Panc1 (cell line): ENCODE measurements at regions of chr22 and their contacts with region 1.

Region 1: DNA sequence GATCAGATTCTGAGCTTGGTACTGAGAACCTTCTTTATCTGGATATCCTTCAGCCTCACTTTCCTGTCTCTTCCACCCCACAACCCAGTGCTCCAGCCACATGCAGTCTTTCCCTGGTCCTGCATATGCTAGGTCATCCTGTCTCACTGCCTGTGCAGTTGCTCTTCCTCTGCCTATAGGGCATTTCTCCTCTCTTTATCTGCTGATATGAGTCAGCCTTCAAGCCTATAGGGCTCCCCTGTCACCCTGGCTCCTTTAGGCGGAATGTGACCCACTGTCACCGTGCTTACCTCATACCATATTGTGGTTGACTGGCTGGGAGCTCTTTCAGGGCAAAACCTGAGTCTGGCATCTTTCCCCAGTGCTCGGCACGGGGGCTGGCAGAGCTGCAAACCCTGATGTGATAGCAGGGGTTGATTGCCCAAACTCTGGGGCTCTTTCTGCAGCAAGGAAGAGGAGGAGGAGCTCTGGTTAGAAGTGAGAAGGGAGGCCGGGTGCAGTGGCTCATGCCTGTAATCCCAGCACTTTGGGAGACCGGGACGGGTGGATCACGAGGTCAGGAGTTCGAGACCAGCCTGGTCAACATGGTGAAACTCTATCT is 26.3 kb downstream of the MEI1 start:
- DNase-seq: no peak
- ATAC-seq: peak; percentile 56; the same call in 1 of the 2 replicates
- H3K4me3 ChIP-seq: no peak overlapping the region
- H3K27ac ChIP-seq: no peak overlapping the region
- H3K4me1 ChIP-seq: no peaks in the 10 kb centered on the region
- H3K27me3 ChIP-seq: no peaks in the 10 kb centered on the region
- CTCF ChIP-seq: no peak

Region 2: GRCh38 chr22:41636467-41636866 is 89.1 kb before region 1 on chr22:
- CTCF ChIA-PET with region 1: no interaction called
- POLR2A ChIA-PET with region 1: no interaction called
- in situ Hi-C with region 1: no loop called
- intact Hi-C with region 1: no loop called
- DNase-seq: no peak
- ATAC-seq: no peak
- H3K4me3 ChIP-seq: no peak overlapping the region
- H3K27ac ChIP-seq: no peak overlapping the region
- H3K4me1 ChIP-seq: no peaks in the 10 kb centered on the region
- H3K27me3 ChIP-seq: no peaks in the 10 kb centered on the region
- CTCF ChIP-seq: no peak

Region 3: DNA sequence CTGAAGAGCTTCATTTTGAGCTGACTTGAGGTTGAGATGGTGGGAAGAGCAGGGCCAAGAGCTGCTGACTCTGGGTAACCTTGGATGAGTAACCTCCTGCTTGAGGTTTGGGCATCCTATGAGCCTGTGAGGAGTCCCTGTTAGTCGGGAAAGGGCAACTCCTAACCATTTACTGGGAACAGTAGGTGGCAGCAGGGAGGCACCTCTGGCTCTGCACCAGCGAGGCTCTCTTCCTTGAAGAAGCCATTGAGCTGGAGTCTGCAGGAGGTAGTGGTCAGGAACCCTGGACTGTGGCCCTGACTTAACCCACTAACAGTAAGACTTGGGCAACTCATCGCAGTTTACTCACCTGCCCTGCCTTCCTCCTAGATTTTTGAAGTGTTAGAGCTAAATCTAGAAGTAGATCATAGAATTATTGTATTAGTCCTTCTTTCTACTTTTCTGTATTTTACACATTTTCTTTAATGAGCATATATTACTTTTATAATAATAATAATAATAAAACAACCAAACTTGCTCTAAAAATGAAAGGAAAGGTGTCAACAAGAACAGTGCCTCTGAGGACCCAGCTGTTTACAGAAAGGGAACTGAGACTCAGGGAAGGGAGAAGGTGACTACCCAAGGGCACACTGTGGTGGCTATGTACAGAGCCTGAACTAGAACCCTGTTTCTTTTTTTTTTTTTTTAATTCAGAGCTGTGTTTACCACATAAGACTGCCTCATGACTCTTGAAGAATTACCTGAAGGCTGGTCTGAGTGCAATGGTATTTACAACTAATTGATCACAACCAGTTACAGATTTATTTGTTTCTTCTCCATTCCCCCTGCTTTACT is 21.2 kb after region 1 on chr22:
- CTCF ChIA-PET with region 1: interaction called, 5 read pairs
- POLR2A ChIA-PET with region 1: interaction called, 14 read pairs
- in situ Hi-C with region 1: no loop called
- intact Hi-C with region 1: no loop called
- DNase-seq: peak; percentile 66
- ATAC-seq: peak; percentile 100
- H3K4me3 ChIP-seq: no peak overlapping the region
- H3K27ac ChIP-seq: no peak overlapping the region
- H3K4me1 ChIP-seq: no peaks in the 10 kb centered on the region
- H3K27me3 ChIP-seq: no peaks in the 10 kb centered on the region
- CTCF ChIP-seq: peak; percentile 84

Region 4: DNA sequence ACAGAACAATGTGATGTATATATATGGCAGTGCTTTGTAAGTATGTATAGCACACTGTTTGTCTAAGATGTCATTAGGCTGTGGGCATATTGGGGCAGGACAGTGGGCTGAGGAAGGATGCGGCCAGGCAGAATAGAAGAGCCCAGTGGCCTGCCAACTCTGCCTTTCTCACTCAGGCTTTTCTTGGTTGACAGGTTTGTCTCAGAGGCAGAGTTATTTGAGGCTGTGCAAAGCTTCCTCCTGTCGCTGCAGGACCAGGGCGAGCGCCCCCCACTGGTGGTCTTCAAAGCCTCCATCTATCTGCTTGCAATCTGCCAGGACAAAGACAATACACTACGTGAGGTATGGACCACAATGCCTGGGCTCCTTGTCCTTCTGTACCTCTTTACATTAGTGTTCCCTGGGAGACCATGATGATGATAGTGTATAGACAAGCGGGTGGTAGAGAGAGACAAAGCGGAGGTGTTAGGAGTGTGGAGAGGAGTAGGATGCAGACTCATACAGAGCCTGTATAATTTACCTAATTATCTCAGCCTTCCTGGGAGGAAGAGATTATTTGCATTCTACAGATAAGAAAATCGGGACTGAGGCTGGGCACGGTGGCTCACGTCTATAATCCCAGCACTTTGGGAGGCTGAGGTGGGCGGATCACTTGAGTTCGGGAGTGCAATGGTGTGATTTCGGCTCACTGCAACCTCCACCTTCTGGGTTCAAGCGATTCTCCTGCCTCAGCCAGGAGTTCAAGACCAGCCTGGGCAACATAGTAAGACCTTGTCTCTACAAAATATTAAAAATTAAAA is 37.6 kb after region 1 on chr22:
- CTCF ChIA-PET with region 1: interaction called, 13 read pairs
- POLR2A ChIA-PET with region 1: no interaction called
- in situ Hi-C with region 1: no loop called
- intact Hi-C with region 1: no loop called
- DNase-seq: no peak
- ATAC-seq: 0 out of 2 replicates have a peak, but pooled peaks have one; percentile 38
- H3K4me3 ChIP-seq: no peak overlapping the region
- H3K27ac ChIP-seq: no peak overlapping the region
- H3K4me1 ChIP-seq: no peaks in the 10 kb centered on the region
- H3K27me3 ChIP-seq: no peaks in the 10 kb centered on the region
- CTCF ChIP-seq: peak; percentile 64